CD4-positive, alpha-beta T cell (primary cell): ENCODE measurements at regions of chr3 and their contacts with region 1.

Region 1: DNA sequence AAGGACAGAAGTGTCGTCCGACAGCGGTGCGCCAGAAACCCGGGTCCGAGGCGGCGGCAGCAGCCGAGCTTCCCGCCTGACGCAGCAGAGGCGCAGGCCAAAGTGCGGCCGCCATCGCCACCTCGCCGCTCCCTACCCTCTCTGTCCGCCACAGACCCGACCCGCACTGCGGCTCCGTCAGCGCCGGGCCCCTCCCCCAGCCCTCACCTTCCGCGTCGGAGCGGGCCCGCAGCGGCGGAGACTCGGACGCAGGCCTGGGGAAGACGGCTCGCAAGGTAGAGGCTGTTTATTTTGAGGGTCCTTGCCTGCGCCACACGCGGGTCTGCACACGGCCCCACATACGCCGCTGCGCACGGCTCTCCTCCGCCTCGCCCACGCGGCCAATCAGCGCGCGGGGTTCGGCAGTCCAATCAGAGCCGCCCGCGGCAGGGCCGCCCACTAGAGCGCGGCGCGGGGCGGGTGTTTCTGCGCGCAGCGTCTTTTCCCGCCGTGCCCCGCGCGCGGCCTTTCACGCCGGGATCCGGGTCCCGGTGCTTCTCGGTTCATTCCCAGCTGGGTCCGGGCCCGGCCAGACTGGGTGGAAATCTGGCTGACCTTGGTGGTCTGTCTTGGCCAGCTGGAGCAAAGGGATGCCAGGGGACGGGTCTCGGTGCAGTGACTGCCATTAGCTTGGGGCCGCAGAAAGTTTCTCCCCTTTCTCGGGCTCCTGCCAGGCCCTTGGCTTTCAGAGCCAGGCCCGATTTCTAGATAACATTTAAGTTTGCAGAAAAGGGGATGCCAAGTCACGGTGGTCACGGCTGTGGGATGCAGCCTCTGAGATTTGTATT is at the start of gene CNBP:
- DNase-seq: peak; percentile 82 to 97 (median 91)
- ATAC-seq: peak; percentile 95
- H3K4me3 ChIP-seq: peak within 1 kb of the TSS; percentile 68
- H3K4me3 Mint-ChIP-seq: peak within 1 kb of the TSS; percentile 100
- H3K27ac ChIP-seq: peak within 1 kb of the TSS; percentile 91 to 95
- H3K27ac Mint-ChIP-seq: peak within 1 kb of the TSS; percentile 100
- H3K4me1 ChIP-seq: peaks cover 37% of the 10 kb centered on the region
- H3K4me1 Mint-ChIP-seq: peaks cover 49% of the 10 kb centered on the region
- H3K27me3 ChIP-seq: no peaks in the 10 kb centered on the region
- H3K27me3 Mint-ChIP-seq: no peaks in the 10 kb centered on the region
- CTCF ChIP-seq: no peak
- total RNA-seq, gene CNBP: 260 to 267 TPM

Region 2: DNA sequence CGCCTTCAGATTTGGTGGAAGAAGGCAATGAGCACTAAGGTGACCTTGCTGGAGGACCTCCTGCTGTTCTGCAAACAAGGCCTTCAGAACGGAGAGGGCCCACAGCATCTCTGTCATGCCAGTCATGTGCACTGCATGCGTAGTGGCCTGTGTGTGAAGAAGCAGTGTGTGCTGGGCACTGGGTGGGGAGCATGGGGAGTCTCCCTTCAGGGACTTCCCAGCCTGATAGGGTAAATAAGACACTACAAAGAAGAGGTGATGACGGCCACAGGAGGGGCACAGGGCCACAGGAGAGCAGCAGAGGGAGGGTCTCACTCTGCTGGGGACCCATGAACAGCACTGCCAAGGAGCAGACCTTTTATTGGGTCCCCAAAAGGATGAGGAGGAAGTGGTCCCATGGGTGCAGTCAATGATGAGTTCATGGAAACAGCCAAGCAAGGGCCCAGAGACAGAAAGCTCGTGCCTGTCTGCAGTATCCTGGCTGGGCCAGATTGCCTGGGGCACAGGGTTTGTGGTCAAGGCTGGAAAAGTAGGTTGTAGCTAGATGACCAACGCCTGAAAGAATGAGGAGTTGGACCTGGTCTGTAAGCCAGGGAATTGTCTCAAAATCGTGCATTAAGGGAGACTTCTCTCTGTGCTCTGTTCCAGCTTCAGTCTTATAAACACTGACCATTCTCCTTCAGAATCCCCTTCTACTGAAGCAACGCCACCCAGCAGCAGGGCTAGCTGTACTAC is 1199.4 kb before region 1 on chr3:
- CTCF ChIA-PET with region 1: no interaction called
- POLR2A ChIA-PET with region 1: no interaction called
- intact Hi-C with region 1: no loop called
- DNase-seq: no peak
- ATAC-seq: no peak
- H3K4me3 ChIP-seq: no peak overlapping the region
- H3K4me3 Mint-ChIP-seq: no peak overlapping the region
- H3K27ac ChIP-seq: no peak overlapping the region
- H3K27ac Mint-ChIP-seq: no peak overlapping the region
- H3K4me1 ChIP-seq: no peaks in the 10 kb centered on the region
- H3K4me1 Mint-ChIP-seq: no peaks in the 10 kb centered on the region
- H3K27me3 ChIP-seq: peaks cover 0 to 4% of the 10 kb centered on the region in 2 experiments
- H3K27me3 Mint-ChIP-seq: no peaks in the 10 kb centered on the region
- CTCF ChIP-seq: no peak

Region 3: DNA sequence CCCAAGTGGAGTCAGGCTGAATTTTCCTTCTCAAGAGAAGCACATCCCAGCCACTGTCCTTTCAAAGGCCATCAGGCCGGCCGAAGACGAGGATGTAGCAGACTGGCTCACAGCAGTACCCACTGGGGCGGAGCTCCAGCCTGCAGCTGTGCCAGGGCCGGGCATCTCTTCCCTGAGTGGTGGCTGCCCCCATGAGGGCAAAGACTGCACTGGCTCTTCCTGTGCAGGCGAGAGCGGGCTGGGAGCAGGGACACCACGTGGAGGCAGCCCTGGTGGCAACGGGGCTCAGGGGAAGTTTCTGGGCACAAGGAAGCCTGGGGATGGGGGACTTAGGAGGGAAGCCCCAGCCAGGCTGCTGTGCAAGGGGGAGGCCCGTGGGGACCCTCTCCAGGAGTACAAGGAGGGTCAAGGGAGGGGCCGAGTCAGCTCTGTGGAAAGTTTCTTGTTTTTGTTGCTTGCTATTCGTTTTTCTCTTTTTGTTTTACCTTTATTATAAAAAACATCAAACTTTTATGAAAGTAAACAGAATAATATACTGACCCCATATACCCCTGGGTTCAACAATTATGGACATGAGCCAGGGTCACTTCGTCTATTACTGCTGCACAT is 599.3 kb before region 1 on chr3:
- CTCF ChIA-PET with region 1: no interaction called
- POLR2A ChIA-PET with region 1: no interaction called
- intact Hi-C with region 1: no loop called
- DNase-seq: peak in 8 of 14 experiments; percentile 8 to 55 (median 18)
- ATAC-seq: peak; percentile 79
- H3K4me3 ChIP-seq: no peak overlapping the region
- H3K4me3 Mint-ChIP-seq: no peak overlapping the region
- H3K27ac ChIP-seq: no peak overlapping the region
- H3K27ac Mint-ChIP-seq: no peak overlapping the region
- H3K4me1 ChIP-seq: no peaks in the 10 kb centered on the region
- H3K4me1 Mint-ChIP-seq: no peaks in the 10 kb centered on the region
- H3K27me3 ChIP-seq: peaks cover 2 to 3% of the 10 kb centered on the region in 2 experiments
- H3K27me3 Mint-ChIP-seq: peaks cover 15% of the 10 kb centered on the region
- CTCF ChIP-seq: no peak

Region 4: GRCh38 chr3:129052675-129053074 is 131.1 kb before region 1 on chr3:
- CTCF ChIA-PET with region 1: interaction called, 5 read pairs
- POLR2A ChIA-PET with region 1: interaction called, 9 read pairs
- intact Hi-C with region 1: loop called in 1 of 2 experiments (anchors 2 kb)
- DNase-seq: no peak
- ATAC-seq: no peak
- H3K4me3 ChIP-seq: no peak overlapping the region
- H3K4me3 Mint-ChIP-seq: no peak overlapping the region
- H3K27ac ChIP-seq: no peak overlapping the region
- H3K27ac Mint-ChIP-seq: no peak overlapping the region
- H3K4me1 ChIP-seq: peaks cover 5% of the 10 kb centered on the region
- H3K4me1 Mint-ChIP-seq: peaks cover 9% of the 10 kb centered on the region
- H3K27me3 ChIP-seq: no peaks in the 10 kb centered on the region
- H3K27me3 Mint-ChIP-seq: no peaks in the 10 kb centered on the region
- CTCF ChIP-seq: no peak

Region 5: DNA sequence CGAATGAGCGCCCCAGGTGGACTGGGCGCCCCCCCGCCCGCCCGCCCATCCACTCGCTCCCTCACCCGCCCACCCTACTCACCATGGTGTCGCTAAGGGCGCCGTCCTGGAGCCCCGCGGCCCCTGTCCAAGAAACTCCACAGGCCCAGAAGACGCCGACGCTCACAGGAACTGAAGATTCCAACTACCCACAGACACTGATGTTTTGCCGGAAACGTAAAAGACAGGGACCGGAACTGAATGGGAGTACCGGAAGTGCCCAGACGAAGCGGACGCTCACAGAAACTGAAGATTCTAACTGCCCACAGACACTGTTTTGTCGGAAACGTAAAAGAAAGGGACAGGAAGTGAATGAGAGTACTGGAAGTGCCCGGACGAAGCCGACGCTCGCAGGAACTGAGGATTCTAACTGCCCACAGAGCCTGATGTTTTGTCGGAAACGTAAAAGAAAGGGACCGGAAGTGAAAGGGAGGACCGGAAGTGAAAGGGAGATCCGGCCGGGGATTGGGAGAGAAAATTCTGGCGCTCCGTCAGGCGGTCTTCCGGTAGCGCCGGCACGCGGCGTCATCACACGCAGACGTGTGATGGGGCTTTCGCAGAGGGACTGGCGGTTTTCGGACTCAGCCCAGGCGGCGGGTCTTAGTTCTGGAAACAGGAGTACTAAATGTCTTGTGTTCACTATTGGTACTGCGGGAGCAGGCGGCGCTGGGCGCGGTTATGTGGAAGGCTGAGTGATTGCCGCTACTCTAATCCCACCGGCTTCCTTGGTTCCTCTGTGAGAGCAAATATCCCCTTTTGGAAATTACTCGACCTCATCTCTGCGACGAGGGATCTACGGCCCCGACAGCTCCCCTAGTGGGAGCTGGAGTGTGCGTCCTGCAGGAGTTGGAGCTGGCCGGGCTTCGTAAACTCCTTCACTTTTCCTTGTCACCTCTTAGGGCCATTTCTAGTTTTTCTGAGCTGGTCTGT is 22.6 kb before region 1 on chr3 and contains the start of gene ISY1:
- CTCF ChIA-PET with region 1: interaction called, 18 read pairs
- POLR2A ChIA-PET with region 1: interaction called, 14 read pairs
- intact Hi-C with region 1: loop called (anchors 1 to 2 kb)
- DNase-seq: peak; percentile 70 to 97 (median 84)
- ATAC-seq: peak; percentile 74
- H3K4me3 ChIP-seq: peak within 1 kb of the TSS; percentile 82
- H3K4me3 Mint-ChIP-seq: peak within 1 kb of the TSS; percentile 96
- H3K27ac ChIP-seq: peak within 1 kb of the TSS; percentile 92 to 99
- H3K27ac Mint-ChIP-seq: peak within 1 kb of the TSS; percentile 95
- H3K4me1 ChIP-seq: peaks cover 24% of the 10 kb centered on the region
- H3K4me1 Mint-ChIP-seq: peaks cover 55% of the 10 kb centered on the region
- H3K27me3 ChIP-seq: no peaks in the 10 kb centered on the region
- H3K27me3 Mint-ChIP-seq: no peaks in the 10 kb centered on the region
- CTCF ChIP-seq: peak; percentile 76
- total RNA-seq, gene ISY1: 28.2 to 28.5 TPM

Region 6: GRCh38 chr3:129166579-129167332 is 17.0 kb before region 1 on chr3:
- CTCF ChIA-PET with region 1: interaction called, 18 read pairs
- POLR2A ChIA-PET with region 1: interaction called, 14 read pairs
- intact Hi-C with region 1: loop called (anchors 1 to 2 kb)
- DNase-seq: no peak
- ATAC-seq: no peak
- H3K4me3 ChIP-seq: no peak overlapping the region
- H3K4me3 Mint-ChIP-seq: no peak overlapping the region
- H3K27ac ChIP-seq: no peak overlapping the region
- H3K27ac Mint-ChIP-seq: peak overlapping the region; percentile 3
- H3K4me1 ChIP-seq: peaks cover 15% of the 10 kb centered on the region
- H3K4me1 Mint-ChIP-seq: peaks cover 42% of the 10 kb centered on the region
- H3K27me3 ChIP-seq: no peaks in the 10 kb centered on the region
- H3K27me3 Mint-ChIP-seq: no peaks in the 10 kb centered on the region
- CTCF ChIP-seq: no peak

Region 7: GRCh38 chr3:129249276-129250065 is 65.7 kb after region 1 on chr3 and contains the start of gene COPG1:
- CTCF ChIA-PET with region 1: interaction called, 7 read pairs
- POLR2A ChIA-PET with region 1: interaction called, 7 read pairs
- intact Hi-C with region 1: loop called (anchors 2 to 5 kb)
- DNase-seq: peak; percentile 72 to 94 (median 86)
- ATAC-seq: peak; percentile 85
- H3K4me3 ChIP-seq: peak within 1 kb of the TSS; percentile 100
- H3K4me3 Mint-ChIP-seq: peak within 1 kb of the TSS; percentile 98
- H3K27ac ChIP-seq: peak within 1 kb of the TSS; percentile 79 to 88
- H3K27ac Mint-ChIP-seq: peak within 1 kb of the TSS; percentile 97
- H3K4me1 ChIP-seq: peaks cover 47% of the 10 kb centered on the region
- H3K4me1 Mint-ChIP-seq: peaks cover 55% of the 10 kb centered on the region
- H3K27me3 ChIP-seq: no peaks in the 10 kb centered on the region
- H3K27me3 Mint-ChIP-seq: no peaks in the 10 kb centered on the region
- CTCF ChIP-seq: no peak
- total RNA-seq, gene COPG1: 77.7 to 79.3 TPM

Region 8: DNA sequence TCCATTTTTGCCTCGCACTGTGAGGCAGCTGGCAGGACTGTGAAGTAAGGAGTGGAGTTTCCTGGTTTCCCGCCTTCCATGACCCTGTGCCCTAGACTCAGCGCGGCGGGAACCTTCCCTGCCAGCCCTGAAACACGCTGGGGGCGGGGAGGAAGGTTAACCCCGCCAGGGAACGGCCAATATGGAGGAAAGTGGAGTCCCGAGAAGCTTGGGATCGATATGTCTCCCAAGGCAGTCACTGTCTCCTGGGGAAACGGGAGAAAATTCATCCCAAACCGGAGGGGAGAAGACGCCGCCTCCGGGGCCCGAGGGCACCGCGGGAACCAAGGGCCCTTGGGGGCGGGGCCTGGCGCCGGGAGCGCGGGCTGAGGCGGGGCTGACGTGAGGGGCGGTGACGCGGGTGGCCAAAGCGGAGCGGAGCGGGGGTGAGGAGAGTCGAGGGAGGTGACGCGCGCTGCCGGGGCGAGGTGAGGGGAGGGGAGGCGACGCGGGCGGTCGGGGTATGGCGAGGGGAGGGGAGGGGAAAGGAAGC is 94.7 kb after region 1 on chr3 and contains the start of gene HMCES:
- CTCF ChIA-PET with region 1: no interaction called
- POLR2A ChIA-PET with region 1: interaction called, 7 read pairs
- intact Hi-C with region 1: loop called in 1 of 2 experiments (anchors 2 kb)
- DNase-seq: peak; percentile 91 to 98 (median 95)
- ATAC-seq: peak; percentile 92
- H3K4me3 ChIP-seq: peak within 1 kb of the TSS; percentile 79
- H3K4me3 Mint-ChIP-seq: peak within 1 kb of the TSS; percentile 97
- H3K27ac ChIP-seq: peak within 1 kb of the TSS; percentile 90 to 93
- H3K27ac Mint-ChIP-seq: peak within 1 kb of the TSS; percentile 95
- H3K4me1 ChIP-seq: peaks cover 45% of the 10 kb centered on the region
- H3K4me1 Mint-ChIP-seq: peaks cover 43% of the 10 kb centered on the region
- H3K27me3 ChIP-seq: no peaks in the 10 kb centered on the region
- H3K27me3 Mint-ChIP-seq: no peaks in the 10 kb centered on the region
- CTCF ChIP-seq: no peak
- total RNA-seq, gene HMCES: 63.5 to 64.0 TPM

Region 9: GRCh38 chr3:129893581-129894070 is 709.8 kb after region 1 on chr3 and contains the start of gene TMCC1:
- CTCF ChIA-PET with region 1: no interaction called
- POLR2A ChIA-PET with region 1: no interaction called
- intact Hi-C with region 1: loop called in 1 of 2 experiments (anchors 10 kb)
- DNase-seq: peak; percentile 79 to 98 (median 88)
- ATAC-seq: peak; percentile 93
- H3K4me3 ChIP-seq: peak within 1 kb of the TSS; percentile 92
- H3K4me3 Mint-ChIP-seq: peak within 1 kb of the TSS; percentile 94
- H3K27ac ChIP-seq: peak within 1 kb of the TSS; percentile 78 to 87
- H3K27ac Mint-ChIP-seq: peak within 1 kb of the TSS; percentile 90
- H3K4me1 ChIP-seq: peaks cover 28% of the 10 kb centered on the region
- H3K4me1 Mint-ChIP-seq: peaks cover 51% of the 10 kb centered on the region
- H3K27me3 ChIP-seq: no peaks in the 10 kb centered on the region
- H3K27me3 Mint-ChIP-seq: no peaks in the 10 kb centered on the region
- CTCF ChIP-seq: no peak
- total RNA-seq, gene TMCC1: 33.3 to 33.8 TPM